PC-3 (cell line): ENCODE measurements at regions of chr11 and their contacts with region 1.

Region 1: GRCh38 chr11:58629857-58630256 is 7.4 kb downstream of the CNTF start:
- DNase-seq: peak; percentile 67
- ATAC-seq: peak; percentile 37
- H3K4me3 ChIP-seq: no peak overlapping the region
- H3K27ac ChIP-seq: no peak overlapping the region
- H3K4me1 ChIP-seq: peaks cover 35% of the 10 kb centered on the region
- H3K27me3 ChIP-seq: no peaks in the 10 kb centered on the region
- CTCF ChIP-seq: peak; percentile 91

Region 2: DNA sequence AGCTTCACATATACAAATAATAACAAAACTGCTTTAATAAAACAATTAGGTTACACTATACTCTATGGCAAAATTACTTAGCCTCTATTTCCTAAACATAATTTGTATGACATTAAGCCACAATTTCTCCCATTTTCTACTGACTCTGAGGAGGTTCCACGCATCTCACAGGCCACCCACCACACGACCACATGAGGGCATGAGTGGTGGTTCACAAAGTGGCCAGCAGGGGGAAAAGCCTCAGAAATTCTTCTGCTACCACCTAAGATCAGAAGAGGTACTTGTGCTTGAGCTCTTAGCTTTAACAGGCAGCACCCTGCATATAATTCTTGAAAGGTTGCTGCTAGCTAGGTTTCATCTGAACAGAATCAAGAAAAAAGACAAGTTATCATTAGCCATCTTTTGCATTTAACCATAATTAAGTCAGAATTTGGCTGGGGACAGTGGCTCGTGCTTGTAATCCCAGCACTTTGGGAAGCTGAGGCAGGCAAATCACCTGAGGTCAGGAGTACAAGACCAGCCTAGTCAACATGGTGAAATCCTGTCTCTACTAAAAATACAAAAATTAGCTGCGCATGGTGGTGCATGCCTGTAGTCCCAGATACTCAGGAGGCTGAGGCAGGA is 61.9 kb before region 1 on chr11:
- CTCF ChIA-PET with region 1: interaction called, 11 read pairs
- POLR2A ChIA-PET with region 1: no interaction called
- intact Hi-C with region 1: loop called (anchors 1 kb)
- DNase-seq: peak; percentile 87
- ATAC-seq: peak; percentile 94
- H3K4me3 ChIP-seq: no peak overlapping the region
- H3K27ac ChIP-seq: no peak overlapping the region
- H3K4me1 ChIP-seq: peaks cover 17% of the 10 kb centered on the region
- H3K27me3 ChIP-seq: no peaks in the 10 kb centered on the region
- CTCF ChIP-seq: peak; percentile 93

Region 3: GRCh38 chr11:58594826-58595225 is 35.0 kb before region 1 on chr11:
- CTCF ChIA-PET with region 1: no interaction called
- POLR2A ChIA-PET with region 1: interaction called, 19 read pairs
- intact Hi-C with region 1: no loop called
- DNase-seq: no peak
- ATAC-seq: no peak
- H3K4me3 ChIP-seq: no peak overlapping the region
- H3K27ac ChIP-seq: no peak overlapping the region
- H3K4me1 ChIP-seq: no peaks in the 10 kb centered on the region
- H3K27me3 ChIP-seq: no peaks in the 10 kb centered on the region
- CTCF ChIP-seq: no peak

Region 4: GRCh38 chr11:59573234-59573633 is 943.4 kb after region 1 on chr11:
- CTCF ChIA-PET with region 1: no interaction called
- POLR2A ChIA-PET with region 1: interaction called, 12 read pairs
- intact Hi-C with region 1: no loop called
- DNase-seq: peak; percentile 48
- ATAC-seq: no peak
- H3K4me3 ChIP-seq: no peak overlapping the region
- H3K27ac ChIP-seq: no peak overlapping the region
- H3K4me1 ChIP-seq: no peaks in the 10 kb centered on the region; the same call in 1 of the 2 replicates
- H3K27me3 ChIP-seq: no peaks in the 10 kb centered on the region
- CTCF ChIP-seq: no peak